ENCODE measurements at regions of chr14 and their contacts with region 1.

Region 1: GRCh38 chr14:78959674-78960264 is 789.6 kb downstream of the NRXN3 start:
- DNase-seq: peak; percentile 82
- ATAC-seq: peak; percentile 97
- H3K4me3 ChIP-seq: no peak overlapping the region
- H3K27ac ChIP-seq: no peak overlapping the region
- H3K4me1 ChIP-seq: no peaks in the 10 kb centered on the region
- H3K27me3 ChIP-seq: no peaks in the 10 kb centered on the region
- CTCF ChIP-seq: peak; percentile 87
- POLR2A ChIP-seq: no peak
- RAD21 ChIP-seq: peak; percentile 86

Region 2: DNA sequence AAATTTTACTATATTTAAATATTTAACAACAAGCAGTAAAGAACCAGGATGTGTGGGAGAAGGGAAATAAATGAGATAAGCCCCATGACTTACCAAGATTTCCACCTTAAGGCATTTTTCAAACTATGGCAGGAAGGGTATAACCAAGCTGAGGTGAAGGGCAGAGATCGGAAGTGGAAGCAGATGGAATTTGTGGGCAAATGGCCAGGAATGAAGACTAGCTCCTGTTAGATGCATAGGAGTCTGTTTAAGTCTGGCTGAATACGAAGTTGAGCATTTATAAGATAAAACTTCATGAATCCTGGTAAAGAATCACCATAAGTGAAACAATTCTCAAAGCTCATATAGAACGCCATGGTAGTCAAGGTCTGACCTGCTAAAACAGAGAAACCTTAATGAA is 1088.0 kb after region 1 on chr14:
- CTCF ChIA-PET with region 1: no interaction called
- POLR2A ChIA-PET with region 1: no interaction called
- dilution Hi-C with region 1: no loop called
- in situ Hi-C with region 1: loop called (anchors 25 kb)
- intact Hi-C with region 1: no loop called
- DNase-seq: no peak
- ATAC-seq: no peak
- H3K4me3 ChIP-seq: no peak overlapping the region
- H3K27ac ChIP-seq: no peak overlapping the region
- H3K4me1 ChIP-seq: no peaks in the 10 kb centered on the region
- H3K27me3 ChIP-seq: no peaks in the 10 kb centered on the region
- CTCF ChIP-seq: no peak
- POLR2A ChIP-seq: no peak
- RAD21 ChIP-seq: no peak